Sciatic nerve (tissue), 2 donors: ENCODE measurements at regions of chr1 and their contacts with region 1.

Region 1: GRCh38 chr1:210311726-210312493 is 16.8 kb upstream of the HHAT start:
- DNase-seq: no peak
- ATAC-seq: peak; percentile 70

Region 2: GRCh38 chr1:208557046-208557722 is 1754.7 kb before region 1 on chr1:
- intact Hi-C with region 1: no loop called
- DNase-seq: no peak
- ATAC-seq: no peak

Region 3: GRCh38 chr1:210144736-210145135 is 167.2 kb before region 1 on chr1:
- intact Hi-C with region 1: loop called (anchors 5 kb)
- DNase-seq: no peak
- ATAC-seq: no peak

Region 4: GRCh38 chr1:210394281-210394821 is 82.4 kb after region 1 on chr1:
- intact Hi-C with region 1: loop called (anchors 2 kb)
- DNase-seq: no peak
- ATAC-seq: peak; percentile 64